ENCODE measurements at regions of chr15 and their contacts with region 1.

Region 1: DNA sequence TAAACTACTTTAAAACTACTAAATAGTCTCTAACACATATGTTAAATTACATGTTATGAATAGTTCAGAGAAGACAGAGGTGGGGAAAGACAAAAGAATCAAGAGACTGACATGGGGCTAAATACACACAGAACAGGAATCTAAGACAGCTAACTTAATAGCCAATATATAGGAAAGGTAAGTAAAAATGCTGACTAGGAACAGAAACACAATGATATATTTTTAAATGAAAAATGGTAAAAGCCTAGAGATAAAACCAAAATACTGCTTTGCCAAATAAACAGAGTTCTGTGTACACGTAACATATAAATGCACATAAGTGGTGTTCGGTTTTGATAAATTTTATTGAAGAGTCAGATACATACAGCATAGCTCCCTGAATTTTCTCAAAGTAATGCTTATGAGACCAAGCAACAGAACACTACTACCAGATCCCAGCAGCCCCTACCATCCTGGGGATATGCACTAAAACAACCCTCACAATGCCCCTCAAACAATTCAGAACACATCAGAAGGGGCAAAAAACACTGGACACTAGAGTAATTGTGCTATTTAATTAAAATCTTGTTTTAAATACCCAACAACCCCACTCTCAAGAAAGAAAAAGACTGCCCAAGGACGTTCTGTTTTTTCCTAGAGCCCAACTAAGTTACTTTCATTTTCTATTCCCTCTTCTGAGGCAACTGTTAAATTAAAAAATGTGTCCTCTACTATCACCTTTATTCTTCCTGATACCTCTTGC is 121.1 kb downstream of the ADAM10 start:
- DNase-seq: peak in 4 of 5 donors; percentile 13 to 31 (median 24)
- H3K4me3 ChIP-seq: peak overlapping the region; percentile 36 to 57
- H3K4me3 Mint-ChIP-seq: peak overlapping the region; percentile 79 to 88 (median 86)
- H3K27ac ChIP-seq: peak overlapping the region; percentile 80
- H3K27ac Mint-ChIP-seq: peak overlapping the region; percentile 94 to 98 (median 96)
- H3K4me1 ChIP-seq: peaks cover 55% of the 10 kb centered on the region
- H3K4me1 Mint-ChIP-seq: peaks cover 39 to 64% (median 51%) of the 10 kb centered on the region in 4 donors
- H3K27me3 ChIP-seq: no peaks in the 10 kb centered on the region
- H3K27me3 Mint-ChIP-seq: no peaks in the 10 kb centered on the region

Region 2: DNA sequence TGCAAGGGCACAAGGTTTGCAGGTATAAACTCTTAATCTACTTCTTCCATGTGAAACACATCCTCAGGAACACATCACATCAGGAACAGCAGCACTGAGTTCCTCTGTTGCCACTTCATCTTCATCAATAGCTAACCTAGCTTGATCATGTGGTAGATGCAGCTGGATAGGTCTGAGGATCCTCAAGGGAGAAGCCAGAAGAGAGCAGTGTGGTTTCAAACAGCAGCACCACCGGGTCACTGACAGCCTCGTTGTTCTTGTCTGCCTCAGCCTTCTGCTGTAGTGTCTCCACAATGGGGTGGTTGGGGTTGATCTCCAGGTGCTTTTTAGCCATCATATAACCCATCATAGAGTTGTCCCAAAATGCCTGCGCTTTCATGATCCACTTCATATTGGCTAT is 62.3 kb after region 1 on chr15:
- CTCF ChIA-PET with region 1: no interaction called
- POLR2A ChIA-PET with region 1: no interaction called
- intact Hi-C with region 1: no loop called
- DNase-seq: no peak
- H3K4me3 ChIP-seq: no peak overlapping the region
- H3K4me3 Mint-ChIP-seq: peak overlapping the region in 3 of 8 donors; percentile 7 to 59 (median 47)
- H3K27ac ChIP-seq: no peak overlapping the region
- H3K27ac Mint-ChIP-seq: peak overlapping the region in 3 of 7 donors; percentile 15 to 53 (median 20)
- H3K4me1 ChIP-seq: peaks cover 22% of the 10 kb centered on the region
- H3K4me1 Mint-ChIP-seq: peaks cover 43 to 55% (median 49%) of the 10 kb centered on the region in 4 donors
- H3K27me3 ChIP-seq: no peaks in the 10 kb centered on the region
- H3K27me3 Mint-ChIP-seq: no peaks in the 10 kb centered on the region

Region 3: GRCh38 chr15:58749532-58750337 is 121.4 kb after region 1 on chr15 and contains the start of gene ADAM10:
- CTCF ChIA-PET with region 1: no interaction called
- POLR2A ChIA-PET with region 1: interaction called, 5 read pairs
- intact Hi-C with region 1: loop called (anchors 5 kb)
- DNase-seq: peak; percentile 93 to 98 (median 94)
- H3K4me3 ChIP-seq: peak within 1 kb of the TSS; percentile 68 to 96
- H3K4me3 Mint-ChIP-seq: peak within 1 kb of the TSS; percentile 96 to 99 (median 97)
- H3K27ac ChIP-seq: peak within 1 kb of the TSS; percentile 79
- H3K27ac Mint-ChIP-seq: peak within 1 kb of the TSS; percentile 94 to 96 (median 95)
- H3K4me1 ChIP-seq: peaks cover 46% of the 10 kb centered on the region
- H3K4me1 Mint-ChIP-seq: peaks cover 26 to 49% (median 36%) of the 10 kb centered on the region in 4 donors
- H3K27me3 ChIP-seq: no peaks in the 10 kb centered on the region
- H3K27me3 Mint-ChIP-seq: no peaks in the 10 kb centered on the region
- total RNA-seq, gene ADAM10: 135 TPM

Measured in CD4-positive, alpha-beta memory T cell (primary cell).